Activated CD4-positive, alpha-beta T cell treated with anti-CD3 and anti-CD28 coated beads, Interleukin-2, amount 10 ng/mL, durations not matched to agents 24 days and 14 days (primary cell): ENCODE measurements at regions of chr17 and their contacts with region 1.

Region 1: GRCh38 chr17:39636927-39637736 is at the start of gene STARD3:
- DNase-seq: peak; percentile 97
- H3K4me3 Mint-ChIP-seq: peak within 1 kb of the TSS; percentile 90
- H3K27ac Mint-ChIP-seq: peak within 1 kb of the TSS; percentile 79
- H3K4me1 Mint-ChIP-seq: peaks cover 35% of the 10 kb centered on the region
- H3K27me3 Mint-ChIP-seq: no peaks in the 10 kb centered on the region
- total RNA-seq, gene STARD3: 53.6 and 60.3 TPM in 2 replicates

Region 2: DNA sequence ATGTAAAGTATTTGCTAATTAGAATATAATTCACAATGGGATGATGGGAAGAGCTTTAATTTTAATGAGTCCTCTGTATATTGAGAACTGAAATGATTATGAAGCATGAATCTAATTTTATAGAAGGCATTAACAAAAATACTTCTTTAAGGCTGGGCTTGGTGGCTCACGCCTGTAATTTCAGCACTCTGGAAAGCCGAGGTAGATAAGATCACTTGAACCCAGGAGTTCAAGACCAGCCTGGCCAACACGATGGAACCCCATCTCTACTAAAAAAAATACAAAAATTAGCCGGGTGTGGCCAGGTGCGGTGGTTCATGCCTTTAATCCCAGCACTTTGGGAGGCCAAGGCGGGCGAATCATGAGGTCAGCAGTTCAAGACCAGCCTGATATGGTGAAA is 163.8 kb before region 1 on chr17:
- intact Hi-C with region 1: no loop called
- DNase-seq: no peak
- H3K4me3 Mint-ChIP-seq: no peak overlapping the region
- H3K27ac Mint-ChIP-seq: no peak overlapping the region
- H3K4me1 Mint-ChIP-seq: peaks cover 4% of the 10 kb centered on the region
- H3K27me3 Mint-ChIP-seq: no peaks in the 10 kb centered on the region

Region 3: DNA sequence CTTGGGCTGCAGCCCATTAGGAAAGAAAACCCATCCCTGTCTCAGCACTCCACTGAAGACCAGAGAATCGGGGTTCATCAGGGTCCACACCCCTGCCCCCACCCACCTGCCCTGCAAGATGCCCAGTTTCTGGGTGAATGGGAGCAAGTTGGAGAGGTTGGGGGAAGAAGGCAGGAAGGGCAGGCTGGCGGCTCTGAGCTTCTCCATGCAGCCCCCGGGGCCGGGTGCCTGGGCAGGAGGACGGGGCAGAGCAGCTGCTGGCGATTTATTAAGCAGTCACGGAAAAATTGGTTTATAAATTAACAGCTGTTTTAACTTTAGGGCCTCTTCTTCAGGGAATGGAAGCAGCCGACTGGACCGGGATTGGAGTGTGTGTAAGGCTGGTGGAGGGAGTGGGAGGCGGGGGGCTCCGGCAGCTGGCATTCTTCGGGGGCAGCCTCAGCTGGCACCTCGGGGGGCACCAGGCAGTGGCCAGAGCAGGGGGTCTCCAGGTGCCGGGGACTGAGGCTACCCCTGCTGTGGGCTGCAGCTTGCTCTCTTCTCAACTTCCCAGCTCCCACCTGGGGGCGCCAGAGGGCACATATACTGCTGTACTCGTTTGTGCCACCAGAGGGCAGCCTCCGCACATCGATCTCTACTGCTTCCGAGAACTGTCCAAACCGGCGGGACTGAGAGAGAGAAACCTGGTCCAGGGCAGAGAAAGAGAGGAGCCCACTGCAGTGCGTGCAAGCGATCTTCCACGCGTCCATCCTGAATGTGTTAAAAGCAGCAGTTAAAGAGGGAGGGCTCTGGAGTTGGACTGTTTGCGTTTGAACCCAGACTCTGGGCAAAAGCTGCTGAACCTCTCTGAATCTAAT is 15.4 kb before region 1 on chr17:
- intact Hi-C with region 1: loop called (anchors 1 kb)
- DNase-seq: peak; percentile 97
- H3K4me3 Mint-ChIP-seq: peak overlapping the region; percentile 76
- H3K27ac Mint-ChIP-seq: peak overlapping the region; percentile 62
- H3K4me1 Mint-ChIP-seq: peaks cover 17% of the 10 kb centered on the region
- H3K27me3 Mint-ChIP-seq: peaks cover 57% of the 10 kb centered on the region

Region 4: DNA sequence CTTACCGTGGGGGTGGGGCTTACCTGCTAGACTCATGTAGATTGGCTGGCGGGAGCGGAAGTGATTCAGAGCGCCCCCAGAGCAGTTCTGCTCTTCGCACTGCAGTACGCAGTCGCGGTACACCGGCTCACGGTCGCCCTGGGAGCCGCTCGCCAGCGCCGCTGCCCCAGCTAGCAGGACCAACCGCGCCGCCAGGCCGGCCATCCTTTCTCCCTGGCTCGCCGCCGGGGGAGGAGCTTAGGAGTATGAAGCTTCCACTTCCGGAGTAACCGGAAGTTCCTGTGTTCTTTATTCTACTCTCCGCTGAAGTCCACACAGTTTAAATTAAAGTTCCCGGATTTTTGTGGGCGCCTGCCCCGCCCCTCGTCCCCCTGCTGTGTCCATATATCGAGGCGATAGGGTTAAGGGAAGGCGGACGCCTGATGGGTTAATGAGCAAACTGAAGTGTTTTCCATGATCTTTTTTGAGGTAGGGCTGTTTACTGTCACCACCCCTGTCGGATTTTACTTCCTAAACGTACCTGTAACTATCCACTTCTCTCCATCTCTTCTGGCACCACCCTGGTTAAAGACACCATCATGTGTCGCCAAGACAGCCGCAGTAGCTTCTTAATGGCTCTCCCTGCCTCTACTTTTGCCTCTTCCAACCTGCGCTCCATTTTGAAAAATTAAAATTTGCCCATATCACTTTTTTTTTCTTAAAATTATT is 50.8 kb after region 1 on chr17 and contains the start of gene PGAP3:
- intact Hi-C with region 1: loop called (anchors 2 kb)
- DNase-seq: peak; percentile 94
- H3K4me3 Mint-ChIP-seq: peak within 1 kb of the TSS; percentile 95
- H3K27ac Mint-ChIP-seq: peak within 1 kb of the TSS; percentile 92
- H3K4me1 Mint-ChIP-seq: peaks cover 14% of the 10 kb centered on the region
- H3K27me3 Mint-ChIP-seq: no peaks in the 10 kb centered on the region
- total RNA-seq, gene PGAP3: 12.5 and 13.5 TPM in 2 replicates

Region 5: DNA sequence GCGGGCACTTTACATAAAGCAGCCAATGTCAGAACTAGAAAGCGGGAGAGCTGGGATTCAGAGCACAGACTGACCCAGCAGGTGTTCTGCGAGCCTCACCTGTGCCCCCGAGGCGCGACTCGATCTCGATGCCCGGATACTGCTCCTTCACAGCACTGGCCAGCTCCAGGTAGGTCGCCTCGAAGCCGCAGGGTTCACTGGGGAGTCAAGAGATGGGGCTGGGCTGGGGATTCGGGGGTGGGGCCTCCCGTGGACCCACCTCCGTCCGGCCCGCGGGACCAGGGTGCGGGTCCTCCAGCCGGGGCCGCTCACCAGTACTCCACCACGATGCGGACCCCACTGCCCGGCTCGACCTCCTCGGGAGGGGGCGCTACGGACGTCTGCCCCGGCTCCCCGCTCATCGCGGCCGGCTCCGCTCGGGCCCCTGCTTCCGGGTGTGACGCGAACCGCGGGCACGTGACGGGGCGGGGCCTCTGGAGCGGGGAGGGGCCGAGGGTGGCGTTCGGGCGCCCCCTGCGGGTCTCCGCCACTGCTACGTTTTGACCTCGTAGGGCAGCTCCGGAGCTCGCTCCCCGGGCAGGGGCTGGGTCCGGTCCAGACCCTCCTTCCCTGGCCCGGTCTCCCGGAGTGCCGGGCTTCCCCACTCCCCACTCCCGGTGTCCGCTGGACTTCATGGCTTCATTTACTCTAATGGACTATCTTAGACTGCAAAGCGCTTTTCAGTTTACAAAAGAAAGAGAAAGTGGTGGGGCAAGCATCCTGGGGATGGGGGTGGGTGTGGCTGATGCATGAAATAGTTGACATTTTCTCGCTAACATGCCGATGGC is 93.2 kb after region 1 on chr17 and contains the start of gene MIEN1:
- intact Hi-C with region 1: loop called (anchors 1 kb)
- DNase-seq: peak; percentile 99
- H3K4me3 Mint-ChIP-seq: peak within 1 kb of the TSS; percentile 95
- H3K27ac Mint-ChIP-seq: peak within 1 kb of the TSS; percentile 92
- H3K4me1 Mint-ChIP-seq: peaks cover 16% of the 10 kb centered on the region
- H3K27me3 Mint-ChIP-seq: peaks cover 2% of the 10 kb centered on the region
- total RNA-seq, gene MIEN1: 29.8 and 33.4 TPM in 2 replicates